ENCODE measurements at regions of chr20 and their contacts with region 1.

Region 1: DNA sequence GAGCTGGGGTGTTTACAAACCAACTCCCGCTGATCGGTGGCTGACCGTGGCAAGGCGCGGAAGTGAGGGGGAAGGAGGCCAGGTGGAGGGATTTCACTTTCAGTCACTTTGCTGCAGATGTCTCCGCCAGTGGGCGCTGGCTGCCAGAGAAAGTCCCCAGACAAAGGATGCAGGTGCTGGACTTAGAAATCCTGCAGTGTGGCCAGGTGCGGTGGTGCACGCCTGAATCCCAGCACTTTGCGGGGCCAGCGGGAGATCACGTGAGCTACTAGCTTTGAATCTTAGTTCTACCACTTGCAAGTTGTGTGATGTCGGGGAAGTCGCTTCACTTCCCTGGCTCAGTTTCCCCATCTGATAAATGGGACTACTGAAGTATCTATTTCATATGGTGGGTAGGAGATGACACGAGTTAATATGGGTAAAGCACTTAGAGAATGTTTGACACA is 180.4 kb downstream of the ZNF217 start:
- DNase-seq: no peak
- ATAC-seq: no peak
- H3K4me3 ChIP-seq: no peak overlapping the region
- H3K27ac ChIP-seq: no peak overlapping the region
- H3K4me1 ChIP-seq: peaks cover 0 to 10% of the 10 kb centered on the region in 2 donors
- H3K27me3 ChIP-seq: no peaks in the 10 kb centered on the region
- CTCF ChIP-seq: no peak
- POLR2A ChIP-seq: no peak

Region 2: DNA sequence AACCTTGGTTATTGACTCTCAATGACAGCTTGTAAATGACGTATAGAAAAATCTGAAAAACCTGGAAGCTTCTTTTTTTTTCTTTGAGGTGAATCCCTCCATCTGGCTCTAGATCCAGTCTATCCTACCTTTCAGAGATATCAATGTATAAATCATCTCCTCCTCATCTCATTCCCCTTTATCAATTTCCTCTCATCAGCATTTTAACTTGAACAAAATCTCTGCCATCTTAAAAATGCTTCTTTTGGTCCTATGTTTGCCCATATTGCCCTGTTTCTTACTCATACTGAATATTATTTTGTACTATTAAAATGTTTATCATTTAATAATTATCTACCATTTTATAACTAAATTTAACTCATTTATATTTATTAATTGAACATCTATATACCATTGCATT is 747.8 kb before region 1 on chr20:
- in situ Hi-C with region 1: no loop called
- intact Hi-C with region 1: no loop called
- DNase-seq: no peak
- ATAC-seq: no peak
- H3K4me3 ChIP-seq: no peak overlapping the region
- H3K27ac ChIP-seq: no peak overlapping the region
- H3K4me1 ChIP-seq: no peaks in the 10 kb centered on the region
- H3K27me3 ChIP-seq: no peaks in the 10 kb centered on the region
- CTCF ChIP-seq: no peak
- POLR2A ChIP-seq: no peak

Region 3: GRCh38 chr20:53399592-53400259 is 13.5 kb before region 1 on chr20:
- in situ Hi-C with region 1: no loop called
- intact Hi-C with region 1: loop called (anchors 1 kb)
- DNase-seq: no peak
- ATAC-seq: no peak
- H3K4me3 ChIP-seq: no peak overlapping the region
- H3K27ac ChIP-seq: no peak overlapping the region
- H3K4me1 ChIP-seq: peaks cover 0 to 5% of the 10 kb centered on the region in 2 donors
- H3K27me3 ChIP-seq: no peaks in the 10 kb centered on the region
- CTCF ChIP-seq: no peak
- POLR2A ChIP-seq: no peak

Region 4: GRCh38 chr20:53453076-53453475 is 39.9 kb after region 1 on chr20:
- in situ Hi-C with region 1: no loop called
- intact Hi-C with region 1: no loop called
- DNase-seq: no peak
- ATAC-seq: no peak
- H3K4me3 ChIP-seq: no peak overlapping the region
- H3K27ac ChIP-seq: no peak overlapping the region
- H3K4me1 ChIP-seq: no peaks in the 10 kb centered on the region
- H3K27me3 ChIP-seq: no peaks in the 10 kb centered on the region
- CTCF ChIP-seq: no peak
- POLR2A ChIP-seq: no peak

Region 5: DNA sequence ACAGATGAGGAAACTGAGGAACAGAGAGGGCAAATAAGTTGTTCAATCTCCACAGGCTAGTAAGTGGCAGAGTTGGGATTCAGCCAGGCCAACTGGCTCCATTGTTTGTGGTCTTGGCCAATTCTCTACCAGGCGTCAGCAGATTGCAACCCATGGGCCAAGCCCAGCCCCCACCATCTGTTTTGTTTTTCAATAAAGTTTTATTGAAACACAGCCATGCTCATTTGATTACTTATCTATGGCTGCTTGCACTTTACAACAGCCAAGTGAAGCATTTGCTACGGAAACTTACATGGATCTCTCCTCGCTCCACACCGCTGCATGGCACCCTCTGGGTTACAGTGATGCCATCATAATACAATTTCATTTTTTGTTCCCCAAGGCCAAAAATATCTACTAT is 89.6 kb after region 1 on chr20:
- in situ Hi-C with region 1: no loop called
- intact Hi-C with region 1: no loop called
- DNase-seq: no peak
- ATAC-seq: no peak
- H3K4me3 ChIP-seq: no peak overlapping the region
- H3K27ac ChIP-seq: no peak overlapping the region
- H3K4me1 ChIP-seq: no peaks in the 10 kb centered on the region
- H3K27me3 ChIP-seq: no peaks in the 10 kb centered on the region
- CTCF ChIP-seq: no peak
- POLR2A ChIP-seq: no peak

Measured in gastrocnemius medialis (tissue), 4 donors.